BJ (cell line): ENCODE measurements at regions of chr11 and their contacts with region 1.

Region 1: DNA sequence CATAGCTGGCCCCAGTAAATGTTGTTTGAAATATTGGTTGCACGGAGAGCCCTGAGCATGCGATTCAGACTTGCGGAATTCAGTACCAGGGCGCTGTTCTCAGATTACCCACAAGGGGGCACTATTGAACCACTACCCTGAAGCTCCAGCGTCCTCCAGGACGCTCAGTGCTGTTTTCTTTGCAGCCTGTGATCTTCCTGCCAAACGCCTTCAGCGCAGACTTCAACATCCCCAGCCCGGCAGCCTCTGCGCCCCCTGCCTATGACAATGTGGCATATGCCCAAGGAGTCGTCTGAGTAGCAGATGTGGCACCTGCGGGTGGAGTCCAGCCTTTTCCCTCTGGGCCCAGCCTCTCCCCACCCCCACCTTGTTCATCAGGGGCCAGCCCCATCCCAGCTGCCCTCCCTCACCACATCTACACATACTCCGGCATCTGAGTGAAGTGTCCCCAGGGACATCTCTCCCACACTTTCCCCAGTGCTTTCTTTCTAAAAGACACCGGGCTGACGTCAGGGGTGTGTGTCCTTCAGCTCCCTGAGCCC is 9.6 kb upstream of the MS4A10 start:
- DNase-seq: peak; percentile 50
- H3K4me3 ChIP-seq: no peak overlapping the region
- H3K27me3 ChIP-seq: peaks cover 1% of the 10 kb centered on the region; the same call in 1 of the 2 replicates
- CTCF ChIP-seq: peak; percentile 92

Region 2: GRCh38 chr11:60748225-60748624 is 27.3 kb before region 1 on chr11:
- CTCF ChIA-PET with region 1: no interaction called
- POLR2A ChIA-PET with region 1: no interaction called
- DNase-seq: no peak
- H3K4me3 ChIP-seq: no peak overlapping the region
- H3K27me3 ChIP-seq: no peaks in the 10 kb centered on the region
- CTCF ChIP-seq: no peak

Region 3: DNA sequence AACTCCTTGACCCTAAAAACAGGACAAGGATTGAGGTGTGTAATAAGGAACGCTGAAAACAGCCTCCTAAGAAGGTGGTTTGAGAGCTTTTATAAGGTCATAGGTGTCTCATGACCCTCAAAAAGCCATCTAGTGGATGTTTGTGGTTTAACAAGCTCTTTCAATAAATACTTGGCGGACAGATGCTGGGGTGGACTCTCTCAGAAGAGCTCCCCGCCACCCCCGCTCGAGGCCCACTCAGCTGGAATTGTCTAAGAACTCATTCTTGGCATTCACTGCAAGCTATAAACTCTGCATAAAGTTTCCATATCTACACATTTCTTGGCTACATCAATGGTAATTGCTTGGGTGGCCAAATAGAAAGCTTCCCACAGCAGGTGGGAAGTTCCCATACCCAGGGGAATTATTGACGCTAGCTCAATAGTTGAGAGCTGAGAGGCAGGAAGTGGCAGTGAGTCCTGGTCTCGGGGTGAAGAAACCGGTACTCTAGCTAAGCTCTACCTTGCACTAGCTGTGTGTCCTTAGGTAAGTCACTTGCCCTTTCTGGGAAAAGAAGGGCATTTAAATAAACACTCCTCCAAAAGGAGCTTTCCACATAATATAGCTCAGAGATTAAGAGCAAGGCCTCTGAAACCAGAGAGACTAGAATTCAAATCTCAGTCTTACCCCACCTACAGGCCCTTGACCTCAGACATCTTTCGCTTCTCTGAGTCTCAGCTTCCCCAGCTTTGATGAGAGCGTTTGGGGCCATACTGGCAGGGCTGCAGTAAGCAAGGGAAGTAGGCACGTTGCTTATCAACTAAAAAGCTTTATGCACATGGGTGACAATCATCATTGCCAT is 12.4 kb before region 1 on chr11:
- CTCF ChIA-PET with region 1: interaction called, 12 read pairs
- POLR2A ChIA-PET with region 1: no interaction called
- DNase-seq: no peak
- H3K4me3 ChIP-seq: no peak overlapping the region
- H3K27me3 ChIP-seq: peaks cover 8% of the 10 kb centered on the region
- CTCF ChIP-seq: peak; percentile 14; the same call in 1 of the 2 replicates

Region 4: GRCh38 chr11:60786811-60787567 is 11.5 kb after region 1 on chr11:
- CTCF ChIA-PET with region 1: interaction called, 39 read pairs
- POLR2A ChIA-PET with region 1: no interaction called
- DNase-seq: peak; percentile 51
- H3K4me3 ChIP-seq: no peak overlapping the region
- H3K27me3 ChIP-seq: peaks cover 2% of the 10 kb centered on the region; the same call in 1 of the 2 replicates
- CTCF ChIP-seq: no peak